ENCODE measurements at regions of chr14 and their contacts with region 1.

Region 1: GRCh38 chr14:91510174-91511042 is at the start of gene PPP4R3A:
- DNase-seq: peak; percentile 97 to 98
- ATAC-seq: peak; percentile 98
- H3K4me3 ChIP-seq: peak within 1 kb of the TSS; percentile 87 to 94
- H3K27ac ChIP-seq: peak within 1 kb of the TSS; percentile 91 to 98
- H3K4me1 ChIP-seq: no peaks in the 10 kb centered on the region
- H3K27me3 ChIP-seq: no peaks in the 10 kb centered on the region
- total RNA-seq, gene PPP4R3A: 69.3 to 75.4 TPM

Region 2: GRCh38 chr14:91545946-91546716 is 35.7 kb after region 1 on chr14:
- intact Hi-C with region 1: no loop called
- DNase-seq: no peak
- ATAC-seq: no peak
- H3K4me3 ChIP-seq: no peak overlapping the region
- H3K27ac ChIP-seq: no peak overlapping the region
- H3K4me1 ChIP-seq: no peaks in the 10 kb centered on the region
- H3K27me3 ChIP-seq: no peaks in the 10 kb centered on the region

Region 3: GRCh38 chr14:91573893-91574837 is 63.8 kb after region 1 on chr14:
- intact Hi-C with region 1: loop called in 1 of 2 experiments (anchors 5 kb)
- DNase-seq: peak; percentile 83 to 88
- ATAC-seq: peak; percentile 83
- H3K4me3 ChIP-seq: peak overlapping the region; percentile 22 to 39
- H3K27ac ChIP-seq: peak overlapping the region in 1 of 2 donors; percentile 49
- H3K4me1 ChIP-seq: no peaks in the 10 kb centered on the region
- H3K27me3 ChIP-seq: no peaks in the 10 kb centered on the region

Measured in aorta (tissue), 5 donors.